ENCODE measurements at regions of chr3 and their contacts with region 1.

Region 1: GRCh38 chr3:13648060-13649001 is 99.4 kb downstream of the FBLN2 start:
- DNase-seq: peak; percentile 71
- H3K4me3 ChIP-seq: no peak overlapping the region
- H3K27ac ChIP-seq: no peak overlapping the region
- H3K4me1 ChIP-seq: no peaks in the 10 kb centered on the region
- H3K27me3 ChIP-seq: peaks cover 3 to 4% of the 10 kb centered on the region in 2 experiments
- CTCF ChIP-seq: peak; percentile 95 to 99
- POLR2A ChIP-seq: no peak

Region 2: GRCh38 chr3:13200946-13201345 is 447.4 kb before region 1 on chr3:
- CTCF ChIA-PET with region 1: no interaction called
- POLR2A ChIA-PET with region 1: no interaction called
- dilution Hi-C with region 1: no loop called
- intact Hi-C with region 1: loop called (anchors 2 kb)
- DNase-seq: no peak
- H3K4me3 ChIP-seq: no peak overlapping the region
- H3K27ac ChIP-seq: no peak overlapping the region
- H3K4me1 ChIP-seq: no peaks in the 10 kb centered on the region
- H3K27me3 ChIP-seq: no peaks in the 10 kb centered on the region
- CTCF ChIP-seq: no peak
- POLR2A ChIP-seq: no peak

Region 3: DNA sequence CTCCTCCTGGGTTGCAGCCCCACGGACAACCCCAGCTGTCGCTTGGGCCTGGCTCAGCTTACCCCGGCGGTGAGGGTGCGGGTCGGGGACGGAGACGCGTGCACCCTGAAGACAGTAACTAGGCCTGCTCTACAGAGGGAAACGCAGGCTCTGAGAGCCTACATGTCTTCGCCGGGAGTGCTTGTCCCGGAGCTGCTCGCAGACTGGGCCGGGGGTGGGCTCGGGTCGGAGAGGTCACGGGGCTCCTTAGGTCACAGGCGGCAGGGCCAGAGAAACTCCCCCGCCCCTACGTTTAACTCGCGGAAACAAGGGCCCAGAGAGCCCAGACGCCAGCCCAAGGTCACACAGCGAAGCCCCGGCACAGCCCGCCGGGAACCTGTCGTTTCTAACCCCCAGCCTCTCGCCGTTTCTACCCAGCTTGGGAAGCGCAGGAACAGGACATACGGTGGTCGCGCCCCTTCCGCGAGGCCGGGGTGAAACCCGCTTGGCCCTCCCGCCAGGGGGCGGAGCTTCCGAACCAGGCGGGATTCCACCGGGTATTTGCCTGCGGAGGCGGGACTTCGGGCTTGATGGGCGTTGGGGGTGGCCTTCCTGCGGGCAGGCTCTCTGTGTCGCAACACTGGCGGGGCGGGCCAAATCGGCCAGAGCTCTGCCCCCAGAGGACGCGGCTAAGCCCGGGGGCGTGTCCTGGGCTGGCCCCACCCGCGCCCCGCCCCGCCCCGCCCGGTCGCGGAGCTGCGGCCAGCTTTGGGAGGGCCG is 168.6 kb before region 1 on chr3 and contains the start of gene HDAC11:
- CTCF ChIA-PET with region 1: interaction called, 19 read pairs
- POLR2A ChIA-PET with region 1: no interaction called
- dilution Hi-C with region 1: no loop called
- intact Hi-C with region 1: no loop called
- DNase-seq: peak; percentile 97
- H3K4me3 ChIP-seq: peak within 1 kb of the TSS; percentile 59 to 93 (median 82)
- H3K27ac ChIP-seq: peak within 1 kb of the TSS; percentile 76
- H3K4me1 ChIP-seq: peaks cover 3% of the 10 kb centered on the region
- H3K27me3 ChIP-seq: no peaks in the 10 kb centered on the region
- CTCF ChIP-seq: peak in 1 of 2 donors; percentile 33
- POLR2A ChIP-seq: no peak
- total RNA-seq, gene HDAC11: 8.3 and 8.8 TPM in 2 replicates

Region 4: GRCh38 chr3:13507769-13508339 is 140.5 kb before region 1 on chr3:
- CTCF ChIA-PET with region 1: interaction called, 746 read pairs
- POLR2A ChIA-PET with region 1: no interaction called
- dilution Hi-C with region 1: no loop called
- intact Hi-C with region 1: no loop called
- DNase-seq: no peak
- H3K4me3 ChIP-seq: no peak overlapping the region
- H3K27ac ChIP-seq: no peak overlapping the region
- H3K4me1 ChIP-seq: no peaks in the 10 kb centered on the region
- H3K27me3 ChIP-seq: no peaks in the 10 kb centered on the region
- CTCF ChIP-seq: no peak
- POLR2A ChIP-seq: no peak

Region 5: GRCh38 chr3:13548696-13549622 is 99.4 kb before region 1 on chr3 and contains the start of gene FBLN2:
- CTCF ChIA-PET with region 1: interaction called, 23 read pairs
- POLR2A ChIA-PET with region 1: no interaction called
- dilution Hi-C with region 1: no loop called
- intact Hi-C with region 1: no loop called
- DNase-seq: no peak
- H3K4me3 ChIP-seq: no peak within 1 kb of the TSS
- H3K27ac ChIP-seq: no peak within 1 kb of the TSS
- H3K4me1 ChIP-seq: peaks cover 5% of the 10 kb centered on the region
- H3K27me3 ChIP-seq: peaks cover 6 to 8% of the 10 kb centered on the region in 2 experiments
- CTCF ChIP-seq: no peak
- POLR2A ChIP-seq: no peak
- total RNA-seq, gene FBLN2: 0.07 and 1.4 TPM in 2 replicates

Region 6: DNA sequence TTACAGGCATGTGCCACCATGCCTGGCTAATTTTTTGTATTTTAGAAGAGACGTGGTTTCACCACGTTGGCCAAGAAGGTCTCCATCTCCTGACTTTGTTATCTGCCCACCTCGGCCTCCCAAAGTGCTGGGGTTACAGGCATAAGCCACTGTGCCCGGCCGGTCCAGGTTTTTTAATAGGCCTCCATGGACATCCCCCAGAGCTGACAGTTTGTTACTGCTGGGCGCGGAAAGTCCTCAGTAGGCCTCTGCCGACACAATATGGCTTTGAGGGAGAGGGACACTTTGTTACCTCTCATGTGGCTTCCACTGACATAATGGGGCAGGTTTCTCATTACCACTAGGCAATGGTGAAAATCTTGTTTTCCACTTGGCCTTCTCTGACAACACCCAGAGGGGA is 79.6 kb after region 1 on chr3:
- CTCF ChIA-PET with region 1: no interaction called
- POLR2A ChIA-PET with region 1: no interaction called
- dilution Hi-C with region 1: no loop called
- intact Hi-C with region 1: no loop called
- DNase-seq: no peak
- H3K4me3 ChIP-seq: no peak overlapping the region
- H3K27ac ChIP-seq: no peak overlapping the region
- H3K4me1 ChIP-seq: no peaks in the 10 kb centered on the region
- H3K27me3 ChIP-seq: no peaks in the 10 kb centered on the region
- CTCF ChIP-seq: no peak
- POLR2A ChIP-seq: no peak